Naive thymus-derived CD8-positive, alpha-beta T cell (primary cell): ENCODE measurements at regions of chr15 and their contacts with region 1.

Region 1: GRCh38 chr15:66472176-66472999 is 25.2 kb downstream of the SNAPC5 start:
- DNase-seq: peak in 9 of 10 donors; percentile 9 to 80 (median 61)
- ATAC-seq: peak; percentile 97 to 98
- H3K4me3 Mint-ChIP-seq: peak overlapping the region; percentile 46 to 86 (median 75)
- H3K27ac Mint-ChIP-seq: peak overlapping the region; percentile 79 to 96 (median 94)
- H3K4me1 Mint-ChIP-seq: peaks cover 17 to 46% (median 36%) of the 10 kb centered on the region in 4 donors
- H3K27me3 Mint-ChIP-seq: no peaks in the 10 kb centered on the region

Region 2: DNA sequence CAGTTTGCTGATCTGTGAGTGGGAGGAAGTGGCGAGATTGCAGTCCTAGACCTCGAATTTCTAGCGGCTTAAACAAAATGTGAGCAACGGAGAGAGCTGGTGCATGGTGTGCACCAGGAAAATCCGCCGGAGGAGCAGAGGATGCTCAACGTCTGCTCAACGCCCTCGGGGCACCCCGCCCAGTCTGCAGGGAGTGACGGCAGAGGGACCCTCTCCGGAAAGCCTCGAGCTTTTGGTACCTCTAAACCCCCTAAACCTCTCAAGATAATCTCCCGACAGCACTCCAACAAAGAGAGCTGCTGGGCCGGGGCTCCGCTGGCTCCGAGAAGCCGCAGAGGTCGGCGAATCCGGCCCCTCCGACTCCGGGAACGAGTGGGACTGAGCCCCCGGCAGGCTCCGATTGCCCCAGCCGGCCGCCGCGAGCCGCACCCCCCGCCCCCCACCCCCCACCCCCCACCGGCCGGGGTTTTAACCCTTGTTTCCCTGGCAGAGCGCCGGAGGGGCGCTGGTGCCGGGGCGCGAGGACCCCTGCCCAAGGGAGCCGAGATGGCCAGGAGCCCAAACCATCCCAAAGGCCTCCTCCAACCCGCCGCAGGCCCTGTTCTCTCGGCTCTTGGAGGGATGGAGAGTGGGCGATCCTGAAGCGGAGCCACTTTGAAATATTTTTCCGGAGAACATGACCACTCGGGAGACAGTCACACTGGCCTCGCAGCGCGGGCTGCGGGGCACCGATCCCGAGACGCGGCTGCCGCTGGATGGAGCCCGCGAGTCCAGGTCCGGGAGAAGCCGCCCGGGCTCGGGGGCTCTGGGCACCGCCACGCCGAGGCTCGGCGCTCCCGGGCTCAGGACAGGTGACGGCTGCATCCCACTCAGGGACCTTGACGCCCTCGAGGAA is 220.4 kb before region 1 on chr15:
- POLR2A ChIA-PET with region 1: no interaction called
- DNase-seq: peak in 8 of 10 donors; percentile 12 to 46 (median 31)
- ATAC-seq: peak; percentile 57 to 81
- H3K4me3 Mint-ChIP-seq: peak overlapping the region; percentile 71 to 87 (median 80)
- H3K27ac Mint-ChIP-seq: no peak overlapping the region
- H3K4me1 Mint-ChIP-seq: peaks cover 14 to 31% (median 17%) of the 10 kb centered on the region in 4 donors
- H3K27me3 Mint-ChIP-seq: peaks cover 29 to 80% (median 56%) of the 10 kb centered on the region in 5 donors

Region 3: GRCh38 chr15:66269326-66270038 is 202.9 kb before region 1 on chr15:
- POLR2A ChIA-PET with region 1: no interaction called
- DNase-seq: no peak
- ATAC-seq: no peak
- H3K4me3 Mint-ChIP-seq: no peak overlapping the region
- H3K27ac Mint-ChIP-seq: no peak overlapping the region
- H3K4me1 Mint-ChIP-seq: peaks cover 4 to 12% (median 10%) of the 10 kb centered on the region in 4 donors
- H3K27me3 Mint-ChIP-seq: peaks cover 0 to 8% (median 0%) of the 10 kb centered on the region in 5 donors

Region 4: DNA sequence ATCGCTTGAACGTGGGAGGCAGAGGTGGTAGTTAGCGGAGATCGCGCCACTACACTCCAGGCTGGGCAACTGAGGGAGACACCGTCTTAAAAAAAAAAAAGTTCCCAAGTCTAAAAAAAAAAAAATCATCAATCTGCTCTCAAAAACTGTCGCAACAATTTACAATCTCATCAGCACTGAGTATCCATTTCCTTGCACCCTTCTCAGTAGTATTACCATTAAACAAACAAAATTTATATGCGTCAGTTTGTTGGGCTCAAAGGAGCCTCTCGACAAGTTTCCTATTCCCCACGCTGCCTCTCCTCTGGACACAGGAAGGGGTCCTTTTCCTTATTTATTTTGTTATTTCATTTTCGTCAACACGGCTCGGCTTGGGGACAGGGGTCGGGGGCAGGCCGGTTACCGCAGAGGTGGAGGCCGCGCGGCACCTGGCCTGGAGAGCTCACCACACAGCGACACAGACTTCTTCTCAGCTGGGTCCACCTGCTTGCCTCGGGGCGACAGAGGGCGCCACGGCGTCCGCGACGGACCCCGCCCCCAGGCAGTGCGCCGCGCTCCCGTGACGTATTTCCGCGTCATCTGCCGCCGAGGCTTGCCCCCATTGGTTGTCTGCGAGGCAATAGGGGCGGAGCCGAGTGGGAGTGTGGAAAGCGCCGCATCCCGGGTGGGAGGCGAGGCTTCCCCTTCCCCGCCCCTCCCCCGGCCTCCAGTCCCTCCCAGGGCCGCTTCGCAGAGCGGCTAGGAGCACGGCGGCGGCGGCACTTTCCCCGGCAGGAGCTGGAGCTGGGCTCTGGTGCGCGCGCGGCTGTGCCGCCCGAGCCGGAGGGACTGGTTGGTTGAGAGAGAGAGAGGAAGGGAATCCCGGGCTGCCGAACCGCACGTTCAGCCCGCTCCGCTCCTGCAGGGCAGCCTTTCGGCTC is 85.9 kb before region 1 on chr15 and contains the start of gene MAP2K1:
- POLR2A ChIA-PET with region 1: interaction called, 10 read pairs
- DNase-seq: peak; percentile 94 to 99 (median 98)
- ATAC-seq: peak; percentile 83 to 89
- H3K4me3 Mint-ChIP-seq: peak within 1 kb of the TSS; percentile 87 to 100 (median 99)
- H3K27ac Mint-ChIP-seq: peak within 1 kb of the TSS; percentile 93 to 100 (median 98)
- H3K4me1 Mint-ChIP-seq: peaks cover 30 to 63% (median 54%) of the 10 kb centered on the region in 4 donors
- H3K27me3 Mint-ChIP-seq: no peaks in the 10 kb centered on the region
- polyA plus RNA-seq, gene MAP2K1: 34.7 to 41.7 (median 39.3) TPM

Region 5: GRCh38 chr15:66504563-66505429 is 32.4 kb after region 1 on chr15 and contains the starts of genes RPL4 and ZWILCH:
- POLR2A ChIA-PET with region 1: interaction called, 14 read pairs
- DNase-seq: peak; percentile 70 to 92 (median 80)
- ATAC-seq: peak; percentile 86 to 90
- H3K4me3 Mint-ChIP-seq: peak within 1 kb of the TSS; percentile 88 to 100 (median 100)
- H3K27ac Mint-ChIP-seq: peak within 1 kb of the TSS; percentile 91 to 100 (median 99)
- H3K4me1 Mint-ChIP-seq: peaks cover 19 to 52% (median 47%) of the 10 kb centered on the region in 4 donors
- H3K27me3 Mint-ChIP-seq: no peaks in the 10 kb centered on the region
- polyA plus RNA-seq, gene RPL4: 1,518 to 1,766 (median 1,686) TPM
- polyA plus RNA-seq, gene ZWILCH: 5.9 to 6.7 (median 6.4) TPM